Right ventricle myocardium inferior (tissue), 1 donor: ENCODE measurements at regions of chr15 and their contacts with region 1.

Region 1: GRCh38 chr15:71011503-71012155 is 103.6 kb upstream of the THSD4 start:
- DNase-seq: no peak
- ATAC-seq: peak; percentile 61

Region 2: GRCh38 chr15:70936326-70936725 is 75.3 kb before region 1 on chr15:
- intact Hi-C with region 1: loop called (anchors 5 kb)
- DNase-seq: no peak
- ATAC-seq: peak; percentile 60

Region 3: DNA sequence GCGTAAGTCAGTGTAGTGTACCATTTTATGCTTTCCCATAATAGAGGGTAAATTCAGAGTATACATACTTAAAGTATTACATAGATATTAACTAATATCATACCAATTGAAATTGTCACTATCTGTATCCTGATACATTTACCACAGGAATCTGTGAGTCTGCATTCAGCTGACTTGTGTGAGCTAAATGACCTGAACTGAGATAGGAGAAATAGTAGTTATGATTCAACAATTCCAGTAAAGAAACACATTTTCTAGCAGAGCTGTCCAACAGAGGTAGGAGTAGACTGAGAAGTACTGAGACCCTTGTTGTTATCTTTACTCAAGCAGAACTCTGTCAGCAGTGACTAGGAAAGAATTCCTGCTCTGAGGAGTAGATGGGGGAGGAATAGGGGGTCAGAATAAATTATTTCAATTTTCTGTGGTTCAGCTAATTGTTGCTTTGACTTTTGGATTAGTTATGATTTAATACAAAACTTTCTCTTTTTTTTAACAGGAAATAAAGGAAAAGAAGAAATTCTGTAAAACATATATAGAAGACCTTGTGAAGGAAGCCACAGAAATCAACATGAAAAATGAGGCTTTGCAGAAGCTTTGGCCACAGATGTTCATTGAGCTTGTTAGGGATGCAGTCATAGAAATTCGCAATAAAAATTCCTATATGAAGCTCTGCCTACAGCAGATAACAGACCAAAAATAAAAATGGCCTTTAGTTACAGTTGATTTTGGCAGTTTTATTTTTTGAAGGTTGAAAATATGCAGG is 37.5 kb after region 1 on chr15:
- intact Hi-C with region 1: no loop called
- DNase-seq: no peak
- ATAC-seq: no peak

Region 4: GRCh38 chr15:71103102-71103676 is 91.6 kb after region 1 on chr15:
- intact Hi-C with region 1: loop called (anchors 5 kb)
- DNase-seq: no peak
- ATAC-seq: peak; percentile 42